MCF 10A (cell line): ENCODE measurements at regions of chr3 and their contacts with region 1.

Region 1: GRCh38 chr3:164962610-164963009 is 115.7 kb downstream of the SI start:
- DNase-seq: no peak
- H3K4me3 Mint-ChIP-seq: no peak overlapping the region
- H3K27ac Mint-ChIP-seq: no peak overlapping the region
- H3K4me1 Mint-ChIP-seq: no peaks in the 10 kb centered on the region
- H3K27me3 Mint-ChIP-seq: peaks cover 71% of the 10 kb centered on the region
- CTCF ChIP-seq: no peak

Region 2: DNA sequence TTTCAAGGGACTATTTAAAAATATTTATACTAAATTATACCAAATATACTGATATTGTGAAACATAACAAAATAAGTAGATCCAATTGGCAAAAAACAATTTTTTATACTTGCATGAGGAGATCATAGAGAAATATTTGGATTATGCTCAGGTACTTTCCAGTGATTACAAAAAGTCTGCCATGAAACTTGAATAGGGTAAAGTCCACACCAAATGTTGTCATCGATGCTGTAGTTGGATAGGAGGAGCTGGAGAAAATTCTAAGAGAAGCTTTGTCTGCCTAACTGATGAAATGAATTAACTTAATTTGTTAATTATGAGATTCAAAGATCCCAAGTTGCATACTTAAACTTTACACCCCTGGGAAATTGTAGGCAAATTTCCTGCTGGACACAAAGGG is 22.3 kb after region 1 on chr3:
- CTCF ChIA-PET with region 1: no interaction called
- POLR2A ChIA-PET with region 1: interaction called, 3 read pairs
- intact Hi-C with region 1: loop called (anchors 2 kb)
- DNase-seq: no peak
- H3K4me3 Mint-ChIP-seq: no peak overlapping the region
- H3K27ac Mint-ChIP-seq: no peak overlapping the region
- H3K4me1 Mint-ChIP-seq: no peaks in the 10 kb centered on the region
- H3K27me3 Mint-ChIP-seq: peaks cover 69% of the 10 kb centered on the region
- CTCF ChIP-seq: no peak

Region 3: DNA sequence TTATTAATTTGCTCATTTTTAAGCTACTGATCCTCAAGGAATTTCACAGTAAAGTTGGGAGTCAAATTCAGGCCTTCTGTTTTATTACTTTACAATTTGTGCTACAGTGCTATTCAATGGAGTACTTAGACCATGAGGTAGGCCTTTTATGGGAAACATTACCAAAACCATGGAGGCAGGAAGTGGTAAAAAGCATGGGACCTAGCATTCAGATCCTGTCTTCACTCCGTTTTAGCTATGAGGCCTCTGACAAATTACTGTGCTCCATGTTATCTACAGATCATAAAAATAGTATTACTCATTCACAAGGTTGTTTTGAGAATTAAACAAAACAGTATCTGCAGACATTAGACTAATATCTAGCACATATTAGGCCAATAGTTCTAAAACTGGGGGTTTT is 374.2 kb after region 1 on chr3:
- CTCF ChIA-PET with region 1: no interaction called
- POLR2A ChIA-PET with region 1: no interaction called
- intact Hi-C with region 1: no loop called
- DNase-seq: no peak
- H3K4me3 Mint-ChIP-seq: no peak overlapping the region
- H3K27ac Mint-ChIP-seq: no peak overlapping the region
- H3K4me1 Mint-ChIP-seq: no peaks in the 10 kb centered on the region
- H3K27me3 Mint-ChIP-seq: no peaks in the 10 kb centered on the region
- CTCF ChIP-seq: no peak